ENCODE measurements at regions of chr11 and their contacts with region 1.

Region 1: DNA sequence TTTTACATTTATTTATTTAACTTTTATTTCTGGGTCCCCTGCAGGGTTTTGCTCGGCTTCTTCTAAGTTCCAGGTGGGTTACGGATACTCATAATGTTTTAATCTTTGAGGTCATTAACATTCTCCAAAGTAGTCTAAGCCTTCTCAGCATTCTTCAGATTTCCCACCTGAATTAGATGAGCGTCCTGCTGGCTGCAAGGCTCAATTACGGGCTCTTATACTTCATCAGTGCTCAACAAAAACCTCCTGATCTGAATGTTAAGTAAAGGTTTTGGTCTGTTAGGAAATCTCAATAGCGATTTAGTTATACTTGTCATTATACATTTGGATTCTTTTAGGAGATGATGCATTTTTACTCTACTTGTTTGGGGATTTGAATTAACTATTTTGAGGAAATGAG is 27.3 kb upstream of the NFRKB start:
- DNase-seq: peak in 1 of 2 experiments; percentile 6
- ATAC-seq: peak in 1 of 2 experiments; percentile 71; a peak in 3 of 6 replicates
- H3K4me3 ChIP-seq: no peak overlapping the region
- H3K27ac ChIP-seq: no peak overlapping the region
- H3K4me1 ChIP-seq: no peaks in the 10 kb centered on the region
- CTCF ChIP-seq: no peak
- EP300 ChIP-seq: no peak
- POLR2A ChIP-seq: no peak
- RAD21 ChIP-seq: no peak

Region 2: DNA sequence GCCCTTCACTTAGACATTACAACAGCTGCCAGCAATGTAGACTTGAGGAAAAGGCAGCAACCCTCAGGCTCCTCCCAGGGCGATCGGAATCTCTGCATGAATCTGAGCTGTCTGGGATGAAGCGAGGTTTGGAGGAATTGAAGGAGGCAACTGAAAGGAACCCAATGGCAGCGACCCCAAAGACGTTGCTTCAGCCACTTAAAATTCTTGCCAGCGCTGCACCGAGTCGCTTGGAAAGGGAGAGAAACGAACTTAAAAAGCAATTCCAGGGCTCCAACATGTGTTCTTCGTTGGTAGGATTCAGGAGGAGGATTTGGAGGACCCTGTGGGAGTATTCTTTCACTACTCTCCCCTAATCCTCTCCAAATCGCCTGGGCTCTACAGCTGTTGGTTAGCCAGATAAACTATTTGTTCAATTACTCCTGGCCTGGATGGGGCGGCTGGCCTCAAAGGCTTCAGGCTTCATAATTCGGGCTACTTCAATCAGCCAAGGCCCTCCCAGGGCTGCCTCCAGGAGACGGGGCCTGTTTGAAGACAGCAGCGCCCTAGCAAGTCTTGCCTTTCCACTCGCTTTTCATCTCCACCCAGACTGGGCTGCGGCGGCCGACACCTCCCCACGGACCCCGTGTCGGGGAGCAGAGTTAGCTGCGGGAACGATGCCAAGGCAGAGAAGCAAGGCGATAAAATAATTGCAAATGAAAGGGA is 179.4 kb before region 1 on chr11:
- CTCF ChIA-PET with region 1: no interaction called
- POLR2A ChIA-PET with region 1: no interaction called
- DNase-seq: no peak
- ATAC-seq: no peak
- H3K4me3 ChIP-seq: no peak overlapping the region
- H3K27ac ChIP-seq: no peak overlapping the region
- H3K4me1 ChIP-seq: no peaks in the 10 kb centered on the region
- CTCF ChIP-seq: no peak
- EP300 ChIP-seq: no peak
- POLR2A ChIP-seq: no peak
- RAD21 ChIP-seq: no peak

Region 3: DNA sequence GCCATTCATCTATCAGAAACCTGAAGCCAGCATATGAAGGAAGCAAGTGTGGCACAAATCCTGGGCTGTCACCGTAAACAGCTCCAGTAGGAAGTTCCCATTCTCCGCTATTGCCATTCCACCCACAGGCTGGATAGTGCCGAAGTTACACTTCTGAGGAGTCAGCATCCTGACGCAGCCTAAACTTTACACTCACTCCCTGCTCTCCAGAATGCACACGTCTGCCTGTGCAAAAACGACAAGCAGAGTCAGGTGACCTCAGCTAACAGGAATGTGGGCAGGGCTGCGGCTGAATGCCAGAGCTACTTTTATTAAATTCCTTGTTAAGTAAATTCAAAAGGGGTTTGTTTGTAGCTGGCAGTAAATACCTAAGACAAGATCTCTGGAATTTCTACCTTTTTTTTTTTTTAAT is 61.0 kb before region 1 on chr11:
- CTCF ChIA-PET with region 1: no interaction called
- POLR2A ChIA-PET with region 1: no interaction called
- DNase-seq: peak; percentile 84 to 89
- ATAC-seq: peak; percentile 98
- H3K4me3 ChIP-seq: 0 out of 3 replicates have a peak overlapping the region, but pooled peaks have one; percentile 1
- H3K27ac ChIP-seq: peak overlapping the region; percentile 69 to 81
- H3K4me1 ChIP-seq: peaks cover 15% of the 10 kb centered on the region
- CTCF ChIP-seq: no peak
- EP300 ChIP-seq: no peak; a peak in 1 of 5 replicates
- POLR2A ChIP-seq: no peak
- RAD21 ChIP-seq: no peak

Region 4: DNA sequence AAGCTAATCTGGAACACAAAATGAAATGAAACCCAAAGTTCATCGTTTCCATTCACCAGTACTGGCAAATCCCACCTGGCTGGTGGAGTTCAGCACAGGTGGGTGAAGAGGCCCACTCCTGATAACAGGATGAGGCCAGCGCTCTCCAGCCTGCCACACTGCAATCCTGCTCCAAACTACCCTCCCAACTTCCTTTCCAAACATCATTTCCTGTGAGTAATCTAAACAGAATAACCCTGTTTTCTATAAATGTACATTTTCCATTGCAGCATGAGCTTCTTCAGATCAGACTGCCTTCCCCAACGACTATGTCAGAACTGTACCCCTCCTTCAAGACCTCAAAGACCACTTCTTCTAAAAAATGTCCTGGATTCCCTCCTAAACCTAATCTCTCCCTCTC is 11.4 kb before region 1 on chr11:
- CTCF ChIA-PET with region 1: interaction called, 11 read pairs
- POLR2A ChIA-PET with region 1: no interaction called
- DNase-seq: no peak
- ATAC-seq: no peak
- H3K4me3 ChIP-seq: no peak overlapping the region
- H3K27ac ChIP-seq: no peak overlapping the region
- H3K4me1 ChIP-seq: no peaks in the 10 kb centered on the region
- CTCF ChIP-seq: no peak
- EP300 ChIP-seq: no peak
- POLR2A ChIP-seq: no peak
- RAD21 ChIP-seq: no peak

Region 5: GRCh38 chr11:129960216-129961214 is 37.8 kb after region 1 on chr11:
- CTCF ChIA-PET with region 1: no interaction called
- POLR2A ChIA-PET with region 1: no interaction called
- DNase-seq: peak; percentile 5 to 9
- ATAC-seq: peak in 1 of 2 experiments; percentile 49; a peak in 2 of 6 replicates
- H3K4me3 ChIP-seq: no peak overlapping the region
- H3K27ac ChIP-seq: peak overlapping the region in 1 of 2 experiments; percentile 37; a peak in 2 of 6 replicates
- H3K4me1 ChIP-seq: peaks cover 12% of the 10 kb centered on the region
- CTCF ChIP-seq: no peak
- EP300 ChIP-seq: no peak
- POLR2A ChIP-seq: no peak
- RAD21 ChIP-seq: no peak

Region 6: DNA sequence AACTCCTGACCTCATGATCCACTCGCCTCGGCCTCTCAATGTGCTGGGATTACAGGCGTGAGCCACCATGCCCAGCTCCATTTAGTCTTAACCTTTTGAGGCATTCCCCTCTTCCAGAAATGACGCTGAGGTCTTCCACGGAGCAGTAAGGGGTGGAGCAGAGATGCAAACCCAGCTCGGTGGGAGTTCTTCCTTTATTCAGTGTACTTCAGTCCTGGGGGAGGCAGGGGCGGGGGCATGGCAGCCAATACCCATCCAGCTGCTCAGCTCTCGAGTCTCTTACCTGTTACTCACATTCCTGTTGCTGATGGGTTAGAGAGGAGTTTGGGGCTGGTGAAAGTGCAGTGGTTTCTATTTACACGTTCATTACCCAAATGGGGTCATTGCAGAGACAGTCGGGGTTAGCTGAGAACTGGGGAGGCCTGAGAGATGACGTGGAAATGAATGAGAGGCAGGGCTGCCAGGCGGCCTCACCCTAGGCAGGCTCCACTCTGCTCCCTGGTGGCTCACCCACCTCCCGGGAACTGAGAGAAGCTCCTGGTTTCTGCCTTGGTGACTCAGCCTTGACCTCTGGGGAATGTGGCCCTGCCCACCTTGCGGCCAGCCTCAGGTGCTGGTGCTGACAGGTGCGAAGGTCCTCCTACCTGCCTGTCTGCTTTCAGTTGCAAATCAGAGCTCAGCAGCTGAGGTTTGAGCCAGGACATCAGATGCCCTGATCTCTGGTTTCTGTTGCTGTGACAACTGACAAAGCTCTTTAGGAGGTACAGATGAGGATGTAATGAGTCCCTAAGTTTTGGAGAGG is 223.5 kb after region 1 on chr11:
- CTCF ChIA-PET with region 1: interaction called, 11 read pairs
- POLR2A ChIA-PET with region 1: no interaction called
- DNase-seq: peak; percentile 52 to 54
- ATAC-seq: peak; percentile 96 to 98
- H3K4me3 ChIP-seq: no peak overlapping the region
- H3K27ac ChIP-seq: peak overlapping the region in 1 of 2 experiments; percentile 61; a peak in 3 of 6 replicates
- H3K4me1 ChIP-seq: peaks cover 13% of the 10 kb centered on the region
- CTCF ChIP-seq: peak; percentile 25; the same call in 2 of the 3 replicates
- EP300 ChIP-seq: no peak
- POLR2A ChIP-seq: no peak
- RAD21 ChIP-seq: peak; percentile 28 to 36; a peak in 2 of 5 replicates